Natural killer cell (primary cell): ENCODE measurements at regions of chr3 and their contacts with region 1.

Region 1: GRCh38 chr3:46976326-46977190 is at the start of gene CCDC12:
- DNase-seq: peak; percentile 93 to 98
- ATAC-seq: peak; percentile 73 to 89 (median 78)
- H3K4me3 ChIP-seq: peak within 1 kb of the TSS; percentile 64
- H3K4me3 Mint-ChIP-seq: peak within 1 kb of the TSS; percentile 96
- H3K27ac ChIP-seq: peak within 1 kb of the TSS; percentile 76
- H3K27ac Mint-ChIP-seq: peak within 1 kb of the TSS; percentile 94
- H3K4me1 ChIP-seq: peaks cover 75% of the 10 kb centered on the region
- H3K4me1 Mint-ChIP-seq: peaks cover 57 to 68% of the 10 kb centered on the region in 2 donors
- H3K27me3 ChIP-seq: no peaks in the 10 kb centered on the region
- H3K27me3 Mint-ChIP-seq: no peaks in the 10 kb centered on the region
- CTCF ChIP-seq: no peak
- total RNA-seq, gene CCDC12: 104 to 114 (median 111) TPM

Region 2: DNA sequence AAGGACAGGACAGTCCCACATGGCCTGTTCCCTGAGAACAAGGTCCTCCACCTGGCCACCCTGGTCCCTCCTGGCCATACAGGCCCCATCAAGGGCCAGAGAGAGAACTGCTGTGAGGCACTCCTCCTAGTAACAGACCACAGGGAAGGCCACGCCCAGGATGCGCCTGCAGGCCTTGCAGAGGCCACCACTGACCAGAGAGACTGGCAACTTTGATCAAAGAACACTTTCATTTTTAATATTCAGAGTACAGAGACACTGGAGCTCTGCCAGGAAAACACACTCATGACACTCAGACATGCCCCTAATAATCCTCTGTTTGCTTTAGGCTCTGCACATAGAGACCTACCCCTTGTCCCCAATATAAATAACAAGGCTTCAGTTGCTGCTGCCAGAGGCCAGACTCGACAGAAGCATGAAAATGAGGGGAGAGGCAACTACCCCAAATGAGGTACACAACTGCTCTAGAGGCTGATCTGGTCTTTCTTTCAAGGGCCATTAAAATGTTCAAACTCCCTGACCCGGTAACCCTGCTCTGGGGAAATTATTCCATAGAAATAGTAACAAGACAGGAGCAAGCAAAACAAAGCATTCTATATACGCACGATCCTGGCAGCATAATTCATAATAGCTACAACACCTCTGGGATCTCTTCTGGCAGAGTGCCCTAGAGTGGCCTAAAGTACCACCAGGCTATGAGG is 44.8 kb before region 1 on chr3:
- intact Hi-C with region 1: loop called (anchors 2 kb)
- DNase-seq: no peak
- ATAC-seq: peak; percentile 18 to 64 (median 42)
- H3K4me3 ChIP-seq: no peak overlapping the region
- H3K4me3 Mint-ChIP-seq: peak overlapping the region; percentile 82
- H3K27ac ChIP-seq: peak overlapping the region; percentile 82
- H3K27ac Mint-ChIP-seq: peak overlapping the region; percentile 88 to 95
- H3K4me1 ChIP-seq: peaks cover 81% of the 10 kb centered on the region
- H3K4me1 Mint-ChIP-seq: peaks cover 63 to 67% of the 10 kb centered on the region in 2 donors
- H3K27me3 ChIP-seq: no peaks in the 10 kb centered on the region
- H3K27me3 Mint-ChIP-seq: no peaks in the 10 kb centered on the region
- CTCF ChIP-seq: no peak

Region 3: DNA sequence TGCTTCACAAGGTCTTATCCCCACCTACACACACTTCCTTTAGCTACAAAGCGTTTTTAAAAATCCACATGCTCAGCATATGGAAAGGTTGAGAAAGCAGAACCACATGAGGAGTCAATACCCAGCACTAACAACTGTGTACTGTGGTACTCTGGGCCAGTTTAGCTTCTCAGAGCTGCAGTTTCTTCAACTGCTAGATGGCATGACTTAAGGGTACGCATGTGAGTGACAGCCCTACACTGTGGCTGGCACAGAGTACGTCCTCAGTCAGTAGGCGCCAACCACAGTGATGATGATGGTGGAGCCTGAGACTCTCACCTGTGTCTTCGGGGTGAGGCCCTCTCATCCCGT is 17.4 kb before region 1 on chr3:
- intact Hi-C with region 1: loop called (anchors 1 kb)
- DNase-seq: peak; percentile 44 to 72
- ATAC-seq: peak; percentile 51 to 67 (median 64)
- H3K4me3 ChIP-seq: no peak overlapping the region
- H3K4me3 Mint-ChIP-seq: peak overlapping the region; percentile 53
- H3K27ac ChIP-seq: peak overlapping the region; percentile 84
- H3K27ac Mint-ChIP-seq: peak overlapping the region; percentile 94 to 99
- H3K4me1 ChIP-seq: peaks cover 73% of the 10 kb centered on the region
- H3K4me1 Mint-ChIP-seq: peaks cover 83 to 85% of the 10 kb centered on the region in 2 donors
- H3K27me3 ChIP-seq: no peaks in the 10 kb centered on the region
- H3K27me3 Mint-ChIP-seq: no peaks in the 10 kb centered on the region
- CTCF ChIP-seq: no peak

Region 4: DNA sequence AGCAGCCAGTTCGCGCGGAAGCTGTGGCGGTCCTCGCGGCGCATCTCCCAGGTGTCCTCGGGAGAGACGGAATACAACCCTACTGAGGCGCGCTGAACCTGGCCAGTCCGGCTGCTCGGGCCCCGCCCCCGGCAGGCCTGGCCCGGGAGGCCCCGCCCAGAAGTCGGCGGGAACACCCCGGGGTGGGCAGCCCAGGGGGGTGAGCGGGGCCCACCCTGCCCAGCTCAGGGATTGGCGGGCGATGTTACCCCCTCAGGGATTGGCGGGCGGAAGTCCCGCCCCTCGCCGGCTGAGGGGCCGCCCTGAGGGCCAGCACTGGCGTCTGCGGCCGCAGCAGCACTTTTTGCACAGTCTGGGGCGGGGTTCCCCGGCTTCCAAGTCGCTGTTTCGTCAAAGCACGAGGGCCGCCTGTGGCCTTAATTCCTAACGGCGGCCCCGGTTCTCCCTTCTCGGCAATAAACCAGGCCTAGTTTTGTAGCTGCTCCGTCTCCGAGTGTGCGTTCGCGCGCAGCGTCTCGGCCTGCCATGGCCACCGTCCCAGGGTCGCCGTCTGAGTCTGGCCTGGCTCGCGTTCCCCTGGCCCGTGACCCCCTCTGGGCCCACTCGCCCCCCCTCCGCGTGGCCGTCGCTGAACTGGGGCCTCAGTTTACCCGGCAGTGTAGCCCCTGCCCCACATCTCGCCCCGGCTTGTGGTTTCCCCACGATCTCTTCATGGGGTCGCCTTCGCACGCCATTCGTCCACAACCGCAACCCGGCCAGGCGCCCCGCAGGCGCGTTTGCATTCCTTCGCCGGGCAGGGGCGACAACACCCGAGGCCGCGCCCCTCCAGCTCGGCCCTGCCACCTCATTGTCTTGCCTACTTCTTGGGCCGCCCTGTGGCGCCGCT is 32.9 kb after region 1 on chr3:
- intact Hi-C with region 1: loop called (anchors 1 kb)
- DNase-seq: peak; percentile 84 to 86
- ATAC-seq: peak; percentile 92 to 93 (median 93)
- H3K4me3 ChIP-seq: peak overlapping the region; percentile 25
- H3K4me3 Mint-ChIP-seq: peak overlapping the region; percentile 83
- H3K27ac ChIP-seq: peak overlapping the region; percentile 76
- H3K27ac Mint-ChIP-seq: peak overlapping the region; percentile 87 to 93
- H3K4me1 ChIP-seq: peaks cover 18% of the 10 kb centered on the region
- H3K4me1 Mint-ChIP-seq: peaks cover 11 to 23% of the 10 kb centered on the region in 2 donors
- H3K27me3 ChIP-seq: no peaks in the 10 kb centered on the region
- H3K27me3 Mint-ChIP-seq: no peaks in the 10 kb centered on the region
- CTCF ChIP-seq: peak; percentile 10

Region 5: DNA sequence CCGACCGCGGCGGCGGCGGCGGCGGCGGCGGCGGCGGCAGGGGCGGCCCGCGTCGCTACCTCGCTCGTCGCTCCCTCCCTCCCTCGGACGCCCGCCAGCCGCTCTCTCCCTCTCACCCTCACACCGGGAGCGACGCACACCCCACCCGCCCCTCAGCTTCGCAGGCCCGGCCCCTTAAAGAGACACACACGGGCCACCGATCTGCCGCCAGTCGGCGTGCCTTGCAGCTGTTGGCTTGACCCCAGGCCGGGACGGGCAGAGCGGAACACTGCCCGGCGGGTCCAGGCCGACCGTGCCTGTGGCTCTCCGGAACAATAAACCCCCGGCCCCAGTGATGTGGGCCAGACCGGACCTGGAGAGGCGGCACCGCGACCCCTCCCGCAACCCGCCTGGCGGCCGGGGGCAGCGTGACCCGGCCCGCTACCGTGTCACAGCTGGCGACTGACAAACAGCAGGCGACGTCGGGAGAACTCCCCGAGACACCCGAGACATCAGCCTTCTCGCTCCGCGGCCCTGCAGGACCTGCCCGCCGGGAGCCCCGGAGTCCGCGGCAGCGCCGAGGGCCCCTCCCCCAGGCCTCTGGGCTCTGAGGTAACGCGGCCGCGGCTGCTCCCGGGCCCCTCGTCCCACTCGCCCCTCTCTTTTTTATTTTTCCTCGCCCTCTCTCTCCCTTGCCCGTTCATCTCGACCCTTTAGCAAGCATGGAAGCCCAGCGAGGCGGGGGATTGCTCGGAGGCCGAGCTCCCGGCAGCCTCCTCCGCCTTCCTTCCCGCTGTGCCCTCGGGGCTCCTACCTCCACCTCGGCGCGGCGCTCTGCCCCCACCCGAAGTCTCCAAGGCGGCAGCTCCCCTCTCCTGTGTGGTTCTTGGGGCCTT is 187.7 kb after region 1 on chr3 and contains the start of gene SETD2:
- intact Hi-C with region 1: loop called (anchors 2 kb)
- DNase-seq: peak; percentile 78 to 91
- ATAC-seq: peak; percentile 85 to 94 (median 87)
- H3K4me3 ChIP-seq: peak within 1 kb of the TSS; percentile 91
- H3K4me3 Mint-ChIP-seq: peak within 1 kb of the TSS; percentile 96
- H3K27ac ChIP-seq: peak within 1 kb of the TSS; percentile 90
- H3K27ac Mint-ChIP-seq: peak within 1 kb of the TSS; percentile 86 to 95
- H3K4me1 ChIP-seq: peaks cover 30% of the 10 kb centered on the region
- H3K4me1 Mint-ChIP-seq: peaks cover 51 to 52% of the 10 kb centered on the region in 2 donors
- H3K27me3 ChIP-seq: no peaks in the 10 kb centered on the region
- H3K27me3 Mint-ChIP-seq: no peaks in the 10 kb centered on the region
- CTCF ChIP-seq: peak; percentile 40
- total RNA-seq, gene SETD2: 86.5 to 104 (median 95.9) TPM

Region 6: GRCh38 chr3:47762233-47762632 is 785.7 kb after region 1 on chr3:
- intact Hi-C with region 1: no loop called
- DNase-seq: no peak
- ATAC-seq: no peak
- H3K4me3 ChIP-seq: no peak overlapping the region
- H3K4me3 Mint-ChIP-seq: no peak overlapping the region
- H3K27ac ChIP-seq: no peak overlapping the region
- H3K27ac Mint-ChIP-seq: peak overlapping the region in 1 of 2 donors; percentile 51
- H3K4me1 ChIP-seq: no peaks in the 10 kb centered on the region
- H3K4me1 Mint-ChIP-seq: peaks cover 0 to 14% of the 10 kb centered on the region in 2 donors
- H3K27me3 ChIP-seq: no peaks in the 10 kb centered on the region
- H3K27me3 Mint-ChIP-seq: no peaks in the 10 kb centered on the region
- CTCF ChIP-seq: no peak